Common myeloid progenitor, CD34-positive (primary cell): ENCODE measurements at regions of chr1 and their contacts with region 1.

Region 1: DNA sequence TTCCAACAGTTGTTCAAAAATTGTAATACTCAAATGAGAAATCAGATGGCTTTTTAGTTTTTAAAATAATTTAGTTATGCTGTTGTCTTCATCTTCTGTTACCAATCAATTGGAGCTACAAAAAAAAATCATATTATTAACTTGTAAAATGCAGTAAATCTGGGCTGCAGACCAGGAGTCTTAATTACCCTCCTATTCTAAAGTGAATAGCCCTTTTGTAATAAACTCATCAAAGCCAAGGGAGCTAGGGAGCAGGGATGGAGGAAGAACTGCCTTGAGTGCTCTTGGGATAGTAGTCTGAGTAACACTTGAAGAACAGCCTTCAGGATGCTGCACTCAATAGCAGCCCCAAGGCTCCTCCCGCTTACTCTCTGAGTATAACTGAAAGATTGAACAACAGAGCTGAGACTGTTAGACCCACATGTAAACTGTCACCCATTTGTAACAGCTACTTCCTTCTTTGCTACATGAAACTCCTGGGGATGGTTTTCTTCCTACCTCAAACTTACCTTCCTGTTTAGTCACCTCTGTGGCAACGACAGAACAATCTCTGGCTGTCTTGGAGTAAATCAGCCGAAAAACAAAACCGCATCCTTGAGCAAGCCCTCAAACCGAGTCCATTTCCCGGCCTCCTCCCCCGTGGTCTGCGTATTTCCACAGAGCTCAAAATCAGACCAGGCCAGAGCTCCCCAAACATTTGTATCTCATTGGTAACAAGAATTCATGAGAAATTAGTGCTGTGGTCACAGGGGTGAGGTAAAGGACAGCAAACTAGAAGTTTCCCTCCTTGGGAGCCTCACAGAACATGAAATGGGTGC is 55.9 kb downstream of the CD58 start:
- DNase-seq: peak; percentile 92 to 98 (median 97)
- H3K4me3 ChIP-seq: peak overlapping the region in 5 of 7 experiments; percentile 12 to 51 (median 38)
- H3K27ac ChIP-seq: peak overlapping the region; percentile 57 to 80
- H3K4me1 ChIP-seq: peaks cover 19 to 56% (median 43%) of the 10 kb centered on the region in 4 experiments
- H3K27me3 ChIP-seq: no peaks in the 10 kb centered on the region

Region 2: GRCh38 chr1:116498789-116499628 is 15.9 kb before region 1 on chr1:
- CTCF ChIA-PET with region 1: interaction called, 31 read pairs
- POLR2A ChIA-PET with region 1: interaction called, 26 read pairs
- DNase-seq: peak; percentile 63 to 68 (median 66)
- H3K4me3 ChIP-seq: no peak overlapping the region
- H3K27ac ChIP-seq: no peak overlapping the region
- H3K4me1 ChIP-seq: peaks cover 9 to 53% (median 29%) of the 10 kb centered on the region in 4 experiments
- H3K27me3 ChIP-seq: no peaks in the 10 kb centered on the region

Region 3: GRCh38 chr1:116504308-116505156 is 10.4 kb before region 1 on chr1:
- CTCF ChIA-PET with region 1: interaction called, 31 read pairs
- POLR2A ChIA-PET with region 1: interaction called, 26 read pairs
- DNase-seq: peak; percentile 88 to 99 (median 98)
- H3K4me3 ChIP-seq: peak overlapping the region in 3 of 7 experiments; percentile 16 to 26 (median 26)
- H3K27ac ChIP-seq: peak overlapping the region; percentile 20 to 79
- H3K4me1 ChIP-seq: peaks cover 24 to 74% (median 44%) of the 10 kb centered on the region in 4 experiments
- H3K27me3 ChIP-seq: no peaks in the 10 kb centered on the region

Region 4: GRCh38 chr1:116538544-116538943 is 23.6 kb after region 1 on chr1:
- CTCF ChIA-PET with region 1: interaction called, 12 read pairs
- POLR2A ChIA-PET with region 1: interaction called, 4 read pairs
- DNase-seq: peak in 2 of 3 donors; percentile 40 to 57
- H3K4me3 ChIP-seq: no peak overlapping the region
- H3K27ac ChIP-seq: peak overlapping the region in 1 of 2 experiments; percentile 21
- H3K4me1 ChIP-seq: peaks cover 8 to 33% (median 24%) of the 10 kb centered on the region in 4 experiments
- H3K27me3 ChIP-seq: no peaks in the 10 kb centered on the region

Region 5: GRCh38 chr1:116559304-116559761 is 44.4 kb after region 1 on chr1:
- CTCF ChIA-PET with region 1: no interaction called
- POLR2A ChIA-PET with region 1: no interaction called
- DNase-seq: no peak
- H3K4me3 ChIP-seq: no peak overlapping the region
- H3K27ac ChIP-seq: no peak overlapping the region
- H3K4me1 ChIP-seq: peaks cover 7 to 27% (median 11%) of the 10 kb centered on the region in 4 experiments
- H3K27me3 ChIP-seq: no peaks in the 10 kb centered on the region